Gastrocnemius medialis (tissue), 4 donors: ENCODE measurements at regions of chr11 and their contacts with region 1.

Region 1: DNA sequence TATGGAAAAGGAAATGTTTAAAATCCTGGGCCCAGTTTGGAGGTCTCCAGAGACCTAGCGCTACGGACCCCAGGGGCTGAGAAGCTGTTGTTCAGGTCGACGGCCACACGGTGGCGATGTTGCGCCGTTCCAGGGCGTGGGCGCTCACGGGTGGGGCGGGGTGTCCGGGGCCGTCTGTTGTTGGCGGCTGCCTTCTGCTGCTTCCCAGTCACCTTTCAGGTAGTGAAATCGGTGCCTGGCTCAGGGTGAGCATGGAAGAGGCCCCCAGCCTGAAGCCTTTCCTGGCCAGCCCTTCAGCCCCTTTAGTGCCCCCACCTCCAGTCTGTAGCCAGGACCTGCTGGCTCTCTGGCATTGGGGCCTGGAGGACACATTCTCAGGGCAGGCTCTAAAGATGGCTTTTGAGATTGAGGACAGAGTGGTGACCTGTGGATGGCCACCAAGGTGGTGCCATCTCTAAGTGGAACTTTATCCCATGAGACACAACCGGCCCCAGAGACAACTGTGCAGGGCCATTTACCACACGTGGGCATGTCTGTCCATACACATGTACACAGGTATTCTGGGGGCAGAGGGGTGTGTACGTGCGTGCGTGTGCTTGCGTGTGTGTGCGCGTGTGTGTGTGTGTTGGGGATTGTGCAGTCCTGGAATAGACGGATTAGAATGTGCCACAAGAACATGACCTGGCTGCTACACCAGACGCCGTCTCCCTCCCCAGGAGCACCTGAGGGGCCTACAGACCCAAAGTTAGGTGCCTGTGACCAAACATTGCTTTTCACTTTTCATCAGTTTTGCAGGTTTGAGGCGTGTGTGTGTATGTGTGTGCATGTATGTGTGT is 53.8 kb downstream of the ST14 start:
- DNase-seq: peak in 1 of 2 donors; percentile 27
- ATAC-seq: peak; percentile 75 to 89
- H3K4me3 ChIP-seq: no peak overlapping the region
- H3K27ac ChIP-seq: no peak overlapping the region
- H3K4me1 ChIP-seq: peaks cover 0 to 7% of the 10 kb centered on the region in 2 donors
- H3K27me3 ChIP-seq: no peaks in the 10 kb centered on the region
- CTCF ChIP-seq: peak; percentile 79 to 98 (median 88)
- POLR2A ChIP-seq: no peak

Region 2: DNA sequence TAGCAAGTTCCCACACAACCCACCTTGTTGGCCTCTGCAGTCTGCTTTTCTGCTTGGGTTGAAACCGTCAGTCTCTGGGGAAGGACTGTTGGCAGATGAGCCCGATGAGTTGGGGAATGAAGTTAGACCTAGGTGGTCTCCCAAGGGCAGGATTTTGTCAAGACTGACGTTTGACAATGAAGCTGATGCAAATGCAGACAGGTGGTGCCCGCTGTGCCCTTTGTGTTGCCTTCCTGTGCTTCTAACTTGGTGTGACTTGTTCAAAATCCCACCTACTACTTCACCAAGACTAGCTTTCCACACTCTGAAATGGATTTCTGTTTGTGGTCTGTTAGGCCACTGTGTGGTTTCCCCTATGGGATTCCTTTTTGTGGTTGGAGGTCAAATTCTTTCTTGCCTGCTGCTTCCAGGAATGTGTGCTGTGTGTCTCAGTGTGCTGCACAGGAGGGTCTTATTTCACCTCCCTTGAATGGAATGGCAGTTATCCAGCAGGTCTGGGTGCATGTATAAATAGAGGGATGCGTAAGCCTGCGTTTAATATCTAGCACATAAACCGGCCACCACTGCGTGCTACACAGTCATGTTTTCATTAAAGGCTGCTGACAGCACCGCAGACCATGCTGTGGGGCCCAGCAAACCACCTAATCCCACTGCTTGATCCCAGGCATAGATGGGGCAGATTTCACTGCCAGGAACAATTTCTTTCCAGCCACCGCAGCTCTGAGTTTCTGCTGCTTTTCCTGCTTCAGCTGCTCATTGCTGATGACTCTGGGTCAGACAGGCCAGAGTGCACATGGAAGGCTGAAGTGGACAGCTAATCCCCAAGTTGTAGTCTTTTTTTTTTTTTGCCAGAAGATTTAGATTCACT is 170.2 kb after region 1 on chr11:
- in situ Hi-C with region 1: loop called in 1 of 4 experiments (anchors 25 kb)
- intact Hi-C with region 1: loop called (anchors 5 kb)
- DNase-seq: peak; percentile 55 to 81
- ATAC-seq: peak; percentile 95 to 98
- H3K4me3 ChIP-seq: no peak overlapping the region
- H3K27ac ChIP-seq: peak overlapping the region; percentile 74 to 83 (median 82)
- H3K4me1 ChIP-seq: peaks cover 12 to 29% of the 10 kb centered on the region in 2 donors
- H3K27me3 ChIP-seq: no peaks in the 10 kb centered on the region
- CTCF ChIP-seq: no peak
- POLR2A ChIP-seq: peak in 1 of 2 donors; percentile 31

Region 3: GRCh38 chr11:130390071-130390758 is 176.9 kb after region 1 on chr11:
- in situ Hi-C with region 1: loop called in 1 of 4 experiments (anchors 25 kb)
- intact Hi-C with region 1: no loop called
- DNase-seq: no peak
- ATAC-seq: peak; percentile 33 to 36
- H3K4me3 ChIP-seq: no peak overlapping the region
- H3K27ac ChIP-seq: no peak overlapping the region
- H3K4me1 ChIP-seq: no peaks in the 10 kb centered on the region
- H3K27me3 ChIP-seq: no peaks in the 10 kb centered on the region
- CTCF ChIP-seq: no peak
- POLR2A ChIP-seq: no peak

Region 4: GRCh38 chr11:130413405-130414106 is 200.2 kb after region 1 on chr11:
- in situ Hi-C with region 1: loop called in 1 of 4 experiments (anchors 10 kb)
- intact Hi-C with region 1: no loop called
- DNase-seq: no peak
- ATAC-seq: peak; percentile 62 to 64
- H3K4me3 ChIP-seq: no peak overlapping the region
- H3K27ac ChIP-seq: no peak overlapping the region
- H3K4me1 ChIP-seq: peaks cover 0 to 5% of the 10 kb centered on the region in 2 donors
- H3K27me3 ChIP-seq: peaks cover 0 to 16% (median 0%) of the 10 kb centered on the region in 3 donors
- CTCF ChIP-seq: no peak
- POLR2A ChIP-seq: no peak

Region 5: GRCh38 chr11:130427581-130428315 is 214.4 kb after region 1 on chr11:
- in situ Hi-C with region 1: loop called in 2 of 4 experiments (anchors 10 kb)
- intact Hi-C with region 1: loop called (anchors 5 kb)
- DNase-seq: no peak
- ATAC-seq: no peak
- H3K4me3 ChIP-seq: peak overlapping the region; percentile 26 to 53 (median 36)
- H3K27ac ChIP-seq: no peak overlapping the region
- H3K4me1 ChIP-seq: peaks cover 2 to 8% of the 10 kb centered on the region in 2 donors
- H3K27me3 ChIP-seq: peaks cover 15 to 24% (median 17%) of the 10 kb centered on the region in 3 donors
- CTCF ChIP-seq: peak in 1 of 5 experiments; percentile 16
- POLR2A ChIP-seq: no peak

Region 6: DNA sequence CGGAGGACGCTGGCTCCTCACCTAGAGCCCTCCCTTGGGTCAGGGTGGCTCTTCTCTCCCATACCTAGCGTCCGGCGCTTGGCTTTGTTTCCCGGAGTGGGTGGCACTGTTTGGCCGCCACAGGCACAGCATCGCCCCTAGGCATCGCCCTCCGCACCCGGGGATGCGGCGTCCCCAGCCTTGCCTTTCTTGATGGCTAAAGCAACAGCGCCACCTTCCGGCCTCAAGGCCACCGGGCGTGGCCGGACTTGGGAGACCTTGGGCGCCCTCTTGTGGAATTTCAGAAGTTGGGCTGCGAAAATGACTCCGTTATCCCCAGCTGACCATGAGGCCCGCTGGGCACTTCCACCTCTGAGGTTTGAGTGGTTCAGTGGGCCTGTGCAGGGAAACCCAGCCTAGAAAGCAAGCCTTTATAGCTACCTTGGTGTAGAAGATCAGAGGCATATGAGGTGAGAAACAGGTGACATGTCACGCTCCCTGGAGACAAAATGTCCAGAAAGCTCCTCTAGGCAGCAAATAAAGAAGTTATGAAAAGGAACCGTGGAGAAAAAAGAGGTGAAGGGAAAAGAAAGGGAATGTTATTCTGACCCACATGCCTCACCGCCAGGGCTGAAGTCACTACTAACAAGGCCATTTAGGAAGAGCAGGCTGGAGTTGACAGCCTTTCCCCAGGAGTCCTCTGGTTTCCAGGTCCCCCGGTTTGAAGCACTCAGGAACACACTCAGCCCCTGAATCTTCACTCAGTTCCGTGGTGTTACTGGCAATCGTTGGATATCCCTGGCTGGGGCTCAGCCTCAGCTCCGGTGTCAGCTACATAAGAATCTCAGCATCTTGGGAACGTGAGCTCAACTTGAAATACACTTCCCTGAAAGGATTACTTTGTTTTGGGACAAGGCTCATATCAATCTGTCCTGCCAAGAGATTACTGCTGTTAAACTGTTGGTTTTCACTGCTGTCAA is 648.8 kb after region 1 on chr11:
- in situ Hi-C with region 1: loop called in 1 of 4 experiments (anchors 25 kb)
- intact Hi-C with region 1: loop called (anchors 5 kb)
- DNase-seq: peak; percentile 76 to 82
- ATAC-seq: peak; percentile 49 to 57
- H3K4me3 ChIP-seq: no peak overlapping the region
- H3K27ac ChIP-seq: peak overlapping the region; percentile 24 to 67 (median 62)
- H3K4me1 ChIP-seq: peaks cover 38 to 55% of the 10 kb centered on the region in 2 donors
- H3K27me3 ChIP-seq: no peaks in the 10 kb centered on the region
- CTCF ChIP-seq: peak; percentile 100
- POLR2A ChIP-seq: no peak

Region 7: GRCh38 chr11:130894322-130895025 is 681.1 kb after region 1 on chr11:
- in situ Hi-C with region 1: loop called in 3 of 4 experiments (anchors 25 kb)
- intact Hi-C with region 1: loop called (anchors 10 kb)
- DNase-seq: peak; percentile 34 to 62
- ATAC-seq: peak; percentile 62 to 68
- H3K4me3 ChIP-seq: no peak overlapping the region
- H3K27ac ChIP-seq: no peak overlapping the region
- H3K4me1 ChIP-seq: peaks cover 31 to 36% of the 10 kb centered on the region in 2 donors
- H3K27me3 ChIP-seq: no peaks in the 10 kb centered on the region
- CTCF ChIP-seq: peak; percentile 74 to 89 (median 83)
- POLR2A ChIP-seq: no peak